ENCODE measurements at regions of chr13 and their contacts with region 1.

Region 1: DNA sequence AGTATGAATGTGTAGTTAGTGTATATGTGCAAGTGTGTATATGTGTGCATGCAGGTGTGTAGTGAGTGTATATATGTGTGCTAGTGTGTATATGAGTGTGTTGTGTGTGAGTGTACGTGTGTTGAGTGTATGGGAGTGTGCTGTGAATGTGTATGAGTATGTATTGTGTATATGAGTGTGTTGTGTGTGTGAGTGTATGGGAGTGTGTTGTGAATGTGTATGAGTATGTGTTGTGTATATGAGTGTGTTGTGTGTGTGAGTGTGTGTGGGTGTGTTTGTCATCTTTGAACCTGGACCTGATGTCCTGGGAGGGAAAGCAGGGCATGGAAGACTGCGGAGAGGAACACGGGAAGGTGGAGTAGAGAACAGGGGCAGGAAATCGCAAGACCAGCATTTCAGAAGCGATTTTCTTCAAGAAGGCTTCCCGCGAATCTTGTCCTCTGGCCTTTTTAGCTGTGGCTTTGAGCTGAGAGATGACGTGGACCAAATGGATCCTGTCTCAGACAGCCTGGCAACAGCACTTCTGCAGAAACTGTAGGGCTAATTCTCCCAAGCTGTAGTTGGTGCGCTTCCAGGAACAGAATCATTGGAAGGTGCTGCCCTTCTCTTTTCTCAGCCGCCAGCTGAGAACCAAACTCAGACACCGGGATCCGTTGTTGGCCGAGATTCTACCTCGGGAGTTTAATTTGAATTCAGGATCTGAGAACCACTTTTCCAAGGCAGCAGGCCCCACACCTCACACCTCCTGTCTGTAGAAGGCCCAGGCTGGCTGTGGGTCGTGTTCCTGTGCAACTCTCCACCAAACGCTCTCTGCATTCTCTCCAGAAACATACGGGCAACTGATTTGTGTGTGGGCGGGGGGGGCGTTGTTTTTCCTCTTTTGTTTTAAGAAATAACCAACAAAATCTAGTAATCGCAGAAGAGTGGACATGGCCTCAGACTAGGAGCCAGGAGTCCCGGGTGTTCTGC is 94.7 kb upstream of the RAP2A start:
- DNase-seq: no peak
- H3K4me3 ChIP-seq: peak overlapping the region; percentile 9 to 19 (median 18)
- H3K27ac ChIP-seq: peak overlapping the region; percentile 83 to 86 (median 84)
- H3K4me1 ChIP-seq: peaks cover 42 to 83% (median 78%) of the 10 kb centered on the region in 4 donors
- H3K27me3 ChIP-seq: no peaks in the 10 kb centered on the region
- CTCF ChIP-seq: no peak
- EP300 ChIP-seq: no peak
- POLR2A ChIP-seq: no peak

Region 2: DNA sequence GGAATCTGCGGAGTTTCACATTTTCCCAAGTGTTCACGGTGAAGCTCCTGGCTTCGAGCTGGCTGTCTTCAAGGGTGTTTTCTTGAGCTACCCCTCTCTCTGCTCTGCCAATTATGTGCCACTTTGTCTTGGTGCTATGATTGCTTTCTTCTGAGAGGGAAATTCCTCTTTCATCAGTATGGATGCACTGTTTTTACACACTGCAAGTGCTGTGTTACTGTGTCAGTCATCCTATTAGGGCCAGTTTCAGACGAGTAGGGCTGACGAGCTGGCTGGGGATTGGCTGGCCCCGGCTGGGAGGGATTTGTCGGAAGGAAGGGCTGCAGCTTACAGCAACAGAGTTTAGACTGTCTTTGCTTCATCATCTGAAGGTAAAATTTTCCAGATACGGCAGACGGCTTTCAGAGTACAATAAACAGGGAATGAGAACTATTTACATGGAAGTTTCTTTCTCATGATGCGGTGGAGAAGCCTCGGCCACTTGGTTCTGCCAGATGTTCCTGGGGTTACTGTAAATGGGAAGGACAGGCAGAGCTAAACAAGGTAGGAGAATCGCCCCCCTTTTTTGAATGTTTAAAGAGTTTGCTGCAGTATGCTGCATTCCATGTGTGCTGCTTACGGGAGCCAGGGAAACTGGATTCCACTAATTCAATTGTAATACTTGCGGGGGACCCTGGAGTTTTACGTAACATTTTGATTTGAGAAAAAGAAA is 117.2 kb before region 1 on chr13 and contains the start of gene MBNL2:
- intact Hi-C with region 1: loop called (anchors 2 kb)
- DNase-seq: peak; percentile 98
- H3K4me3 ChIP-seq: peak within 1 kb of the TSS; percentile 62 to 74 (median 69)
- H3K27ac ChIP-seq: peak within 1 kb of the TSS; percentile 90 to 94 (median 92)
- H3K4me1 ChIP-seq: peaks cover 18 to 34% (median 30%) of the 10 kb centered on the region in 4 donors
- H3K27me3 ChIP-seq: no peaks in the 10 kb centered on the region
- CTCF ChIP-seq: no peak
- EP300 ChIP-seq: peak; percentile 42
- POLR2A ChIP-seq: peak; percentile 67
- total RNA-seq, gene MBNL2: 92.8 to 132 (median 101) TPM

Measured in esophagus muscularis mucosa (tissue), 4 donors.